K562 (cell line): ENCODE measurements at regions of chr22 and their contacts with region 1.

Region 1: DNA sequence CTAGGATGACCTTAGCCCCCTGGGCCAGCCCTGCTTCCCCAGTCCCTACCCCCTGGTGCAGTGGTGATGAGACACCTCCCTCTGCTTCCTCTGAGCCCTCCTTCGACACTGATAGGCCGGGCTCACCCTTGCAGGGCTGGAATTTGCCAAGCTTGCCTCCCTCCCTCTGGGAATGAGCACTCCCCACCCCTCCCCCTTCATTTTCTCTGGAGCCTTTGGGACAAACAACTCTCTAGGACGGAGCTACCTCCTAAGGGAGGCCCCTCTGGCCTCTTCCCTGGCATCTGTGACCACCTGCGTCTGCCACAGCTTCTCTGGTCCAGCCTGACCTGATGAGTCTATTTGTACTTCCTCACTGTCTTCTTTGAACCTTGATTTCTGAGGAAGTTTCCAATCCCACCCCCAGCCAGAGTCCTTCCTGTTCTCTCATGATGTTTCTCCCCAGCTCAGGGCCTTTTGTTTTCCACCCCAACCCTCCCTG is 53.3 kb upstream of the ADA2 start:
- DNase-seq: no peak
- ATAC-seq: no peak
- H3K4me3 ChIP-seq: no peak overlapping the region
- H3K27ac ChIP-seq: no peak overlapping the region
- H3K4me1 ChIP-seq: no peaks in the 10 kb centered on the region; a peak in 1 of 5 replicates
- H3K27me3 ChIP-seq: peaks cover 5 to 17% of the 10 kb centered on the region in 2 experiments; a peak in 2 of 5 replicates
- CTCF ChIP-seq: no peak
- EP300 ChIP-seq: no peak
- POLR2A ChIP-seq: no peak
- RAD21 ChIP-seq: no peak

Region 2: DNA sequence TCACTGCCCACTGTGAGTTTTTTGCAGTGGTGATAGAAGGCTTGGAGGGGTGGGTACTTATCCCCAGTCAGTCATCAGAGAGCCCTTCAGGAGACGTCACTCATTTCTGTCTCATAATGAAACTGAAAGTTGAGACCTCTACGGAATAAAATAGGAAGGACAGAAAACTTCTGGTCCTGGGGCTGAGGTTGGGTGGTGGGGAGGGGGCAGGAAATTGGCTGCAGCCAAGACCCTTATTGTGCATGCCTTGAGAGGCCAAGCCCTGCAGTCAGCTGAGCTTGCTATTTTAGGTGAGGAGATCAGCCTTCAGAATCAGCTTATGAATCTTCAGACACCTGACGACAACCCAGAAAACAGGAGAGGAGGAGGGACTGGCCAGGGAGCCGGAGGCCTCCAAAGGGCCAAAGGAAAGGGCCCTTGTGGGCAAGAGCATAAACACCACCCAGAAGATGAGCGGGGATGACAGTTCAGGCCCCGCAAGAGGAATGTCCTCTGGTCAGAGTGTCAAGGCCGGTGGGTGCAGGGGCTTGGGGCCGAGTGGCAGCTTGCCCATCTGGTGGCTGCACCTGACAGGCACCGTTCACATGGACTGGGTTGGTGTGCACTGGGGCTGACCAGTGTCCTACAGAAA is 35.4 kb before region 1 on chr22:
- CTCF ChIA-PET with region 1: no interaction called
- POLR2A ChIA-PET with region 1: no interaction called
- in situ Hi-C with region 1: no loop called
- intact Hi-C with region 1: no loop called
- DNase-seq: no peak
- ATAC-seq: no peak
- H3K4me3 ChIP-seq: no peak overlapping the region
- H3K27ac ChIP-seq: no peak overlapping the region
- H3K4me1 ChIP-seq: no peaks in the 10 kb centered on the region; a peak in 1 of 5 replicates
- H3K27me3 ChIP-seq: peaks cover 43 to 68% of the 10 kb centered on the region in 2 experiments
- CTCF ChIP-seq: no peak
- EP300 ChIP-seq: no peak
- POLR2A ChIP-seq: no peak
- RAD21 ChIP-seq: no peak

Region 3: DNA sequence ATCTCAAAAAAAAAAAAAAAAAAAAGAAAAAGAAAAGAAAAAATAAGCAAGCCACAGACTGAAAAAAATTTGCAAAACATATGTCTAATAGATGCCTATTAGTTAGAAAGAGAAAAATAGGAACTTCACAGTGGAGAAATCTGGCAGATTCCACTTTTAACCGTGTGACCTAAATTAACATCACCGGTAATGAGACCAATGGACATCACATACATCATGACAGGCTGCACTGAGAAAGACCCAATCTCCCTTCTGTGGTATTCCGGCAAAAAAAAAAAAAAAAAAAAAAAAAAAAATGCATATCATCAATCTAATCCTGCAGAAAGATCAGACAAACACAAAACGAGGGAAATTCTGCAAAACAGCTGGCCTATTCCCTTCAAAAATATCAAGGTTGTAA is 50.0 kb after region 1 on chr22:
- CTCF ChIA-PET with region 1: no interaction called
- POLR2A ChIA-PET with region 1: no interaction called
- in situ Hi-C with region 1: no loop called
- intact Hi-C with region 1: loop called (anchors 10 kb)
- DNase-seq: no peak
- ATAC-seq: no peak
- H3K4me3 ChIP-seq: no peak overlapping the region
- H3K27ac ChIP-seq: no peak overlapping the region
- H3K4me1 ChIP-seq: no peaks in the 10 kb centered on the region
- H3K27me3 ChIP-seq: peaks cover 3 to 6% of the 10 kb centered on the region in 2 experiments; a peak in 2 of 5 replicates
- CTCF ChIP-seq: no peak
- EP300 ChIP-seq: no peak
- POLR2A ChIP-seq: no peak
- RAD21 ChIP-seq: no peak